Activated B cell treated with CpG ODN at 0.5 μM for 24 hours (primary cell): ENCODE measurements at regions of chrX and their contacts with region 1.

Region 1: GRCh38 chrX:154013614-154014360 is 5.9 kb downstream of the IRAK1 start:
- DNase-seq: peak; percentile 32
- ATAC-seq: peak; percentile 76
- H3K4me3 Mint-ChIP-seq: no peak overlapping the region
- H3K27ac Mint-ChIP-seq: peak overlapping the region; percentile 35
- H3K4me1 Mint-ChIP-seq: peaks cover 31% of the 10 kb centered on the region
- H3K27me3 Mint-ChIP-seq: no peaks in the 10 kb centered on the region
- CTCF ChIP-seq: no peak

Region 2: GRCh38 chrX:154002215-154002719 is 11.5 kb before region 1 on chrX:
- CTCF ChIA-PET with region 1: interaction called, 3 read pairs
- POLR2A ChIA-PET with region 1: interaction called, 21 read pairs
- intact Hi-C with region 1: loop called (anchors 2 kb)
- DNase-seq: peak; percentile 27
- ATAC-seq: peak; percentile 73
- H3K4me3 Mint-ChIP-seq: peak overlapping the region; percentile 77
- H3K27ac Mint-ChIP-seq: peak overlapping the region; percentile 85
- H3K4me1 Mint-ChIP-seq: peaks cover 49% of the 10 kb centered on the region
- H3K27me3 Mint-ChIP-seq: no peaks in the 10 kb centered on the region
- CTCF ChIP-seq: no peak

Region 3: DNA sequence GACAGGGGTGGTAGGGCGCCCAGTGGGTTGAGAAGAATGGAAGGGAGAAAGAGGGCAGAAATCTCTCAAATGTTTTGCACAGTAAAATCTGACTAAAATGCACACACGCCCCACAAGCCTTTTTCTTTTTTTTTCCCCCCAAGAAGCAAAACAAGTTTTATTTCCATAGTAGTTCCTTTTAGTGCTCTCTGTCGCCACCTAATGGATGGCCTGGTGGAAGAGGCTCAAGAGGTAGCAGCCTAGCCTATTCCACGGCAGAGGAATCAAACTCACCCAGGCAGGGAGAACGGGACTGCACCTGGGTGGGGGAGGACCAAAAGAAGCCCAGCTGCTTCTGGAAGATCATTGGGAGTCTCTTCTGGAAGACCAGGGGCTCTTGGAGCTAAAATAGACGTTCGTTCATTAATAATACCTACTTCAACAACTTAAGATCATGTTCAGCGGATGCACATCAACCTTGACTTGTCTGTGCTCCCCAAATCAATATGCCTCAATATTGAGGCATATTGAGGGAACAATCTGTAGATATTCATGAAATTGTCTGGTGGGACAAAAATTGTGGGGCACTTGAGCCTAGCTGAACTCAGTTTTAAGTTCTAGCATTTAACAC is 37.5 kb after region 1 on chrX:
- CTCF ChIA-PET with region 1: no interaction called
- POLR2A ChIA-PET with region 1: interaction called, 3 read pairs
- intact Hi-C with region 1: loop called (anchors 1 kb)
- DNase-seq: peak; percentile 24
- ATAC-seq: peak; percentile 73
- H3K4me3 Mint-ChIP-seq: no peak overlapping the region
- H3K27ac Mint-ChIP-seq: no peak overlapping the region
- H3K4me1 Mint-ChIP-seq: peaks cover 10% of the 10 kb centered on the region
- H3K27me3 Mint-ChIP-seq: no peaks in the 10 kb centered on the region
- CTCF ChIP-seq: no peak

Region 4: DNA sequence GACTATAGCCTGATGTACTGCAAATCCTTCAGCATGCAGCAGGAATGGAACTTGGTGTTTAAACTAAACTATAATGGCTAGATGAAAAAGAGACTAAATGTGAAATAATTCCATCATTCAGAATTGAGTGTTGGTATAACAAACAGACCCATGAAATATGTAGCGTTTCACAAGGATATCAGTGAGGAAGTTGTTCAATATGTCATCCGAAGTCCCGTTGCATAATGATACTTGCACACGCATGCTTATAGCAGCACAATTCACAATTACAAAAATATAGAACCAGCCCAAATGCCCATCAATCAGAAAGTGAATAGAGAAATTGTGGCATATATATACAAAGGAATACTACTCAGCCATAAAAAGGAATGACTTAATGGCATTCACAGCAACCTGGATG is 63.3 kb after region 1 on chrX:
- CTCF ChIA-PET with region 1: no interaction called
- POLR2A ChIA-PET with region 1: no interaction called
- intact Hi-C with region 1: no loop called
- DNase-seq: no peak
- ATAC-seq: no peak
- H3K4me3 Mint-ChIP-seq: no peak overlapping the region
- H3K27ac Mint-ChIP-seq: no peak overlapping the region
- H3K4me1 Mint-ChIP-seq: peaks cover 26% of the 10 kb centered on the region
- H3K27me3 Mint-ChIP-seq: no peaks in the 10 kb centered on the region
- CTCF ChIP-seq: no peak

Region 5: GRCh38 chrX:154298312-154298711 is 284.5 kb after region 1 on chrX:
- CTCF ChIA-PET with region 1: no interaction called
- POLR2A ChIA-PET with region 1: interaction called, 12 read pairs
- intact Hi-C with region 1: no loop called
- DNase-seq: no peak
- ATAC-seq: peak; percentile 86
- H3K4me3 Mint-ChIP-seq: no peak overlapping the region
- H3K27ac Mint-ChIP-seq: peak overlapping the region; percentile 53
- H3K4me1 Mint-ChIP-seq: peaks cover 23% of the 10 kb centered on the region
- H3K27me3 Mint-ChIP-seq: no peaks in the 10 kb centered on the region
- CTCF ChIP-seq: no peak

Region 6: GRCh38 chrX:154534862-154535670 is 521.3 kb after region 1 on chrX:
- CTCF ChIA-PET with region 1: no interaction called
- POLR2A ChIA-PET with region 1: no interaction called
- intact Hi-C with region 1: loop called (anchors 2 kb)
- DNase-seq: peak; percentile 77
- ATAC-seq: peak; percentile 96
- H3K4me3 Mint-ChIP-seq: no peak overlapping the region
- H3K27ac Mint-ChIP-seq: peak overlapping the region; percentile 50
- H3K4me1 Mint-ChIP-seq: peaks cover 3% of the 10 kb centered on the region
- H3K27me3 Mint-ChIP-seq: no peaks in the 10 kb centered on the region
- CTCF ChIP-seq: peak; percentile 30